Activated CD4-positive, alpha-beta memory T cell treated with anti-CD3 and anti-CD28 coated beads, Interleukin-2, amount 10 ng/mL, durations not matched to agents 7 days and 5 days (primary cell): ENCODE measurements at regions of chr17 and their contacts with region 1.

Region 1: GRCh38 chr17:21043286-21044232 is 748 bp upstream of the USP22 start:
- DNase-seq: peak; percentile 98
- H3K4me3 Mint-ChIP-seq: peak overlapping the region; percentile 80
- H3K27ac Mint-ChIP-seq: peak overlapping the region; percentile 88
- H3K4me1 Mint-ChIP-seq: peaks cover 30% of the 10 kb centered on the region
- H3K27me3 Mint-ChIP-seq: peaks cover 4% of the 10 kb centered on the region

Region 2: GRCh38 chr17:20922128-20922670 is 121.4 kb before region 1 on chr17:
- CTCF ChIA-PET with region 1: no interaction called
- POLR2A ChIA-PET with region 1: no interaction called
- DNase-seq: no peak
- H3K4me3 Mint-ChIP-seq: no peak overlapping the region
- H3K27ac Mint-ChIP-seq: no peak overlapping the region
- H3K4me1 Mint-ChIP-seq: peaks cover 1% of the 10 kb centered on the region
- H3K27me3 Mint-ChIP-seq: peaks cover 30% of the 10 kb centered on the region

Region 3: GRCh38 chr17:20992987-20993862 is 50.3 kb before region 1 on chr17:
- CTCF ChIA-PET with region 1: interaction called, 12 read pairs
- POLR2A ChIA-PET with region 1: interaction called, 7 read pairs
- DNase-seq: peak; percentile 65
- H3K4me3 Mint-ChIP-seq: no peak overlapping the region
- H3K27ac Mint-ChIP-seq: no peak overlapping the region
- H3K4me1 Mint-ChIP-seq: no peaks in the 10 kb centered on the region
- H3K27me3 Mint-ChIP-seq: no peaks in the 10 kb centered on the region

Region 4: GRCh38 chr17:21019976-21020586 is 23.5 kb before region 1 on chr17:
- CTCF ChIA-PET with region 1: interaction called, 12 read pairs
- POLR2A ChIA-PET with region 1: interaction called, 16 read pairs
- DNase-seq: peak; percentile 61
- H3K4me3 Mint-ChIP-seq: no peak overlapping the region
- H3K27ac Mint-ChIP-seq: no peak overlapping the region
- H3K4me1 Mint-ChIP-seq: peaks cover 25% of the 10 kb centered on the region
- H3K27me3 Mint-ChIP-seq: no peaks in the 10 kb centered on the region

Region 5: DNA sequence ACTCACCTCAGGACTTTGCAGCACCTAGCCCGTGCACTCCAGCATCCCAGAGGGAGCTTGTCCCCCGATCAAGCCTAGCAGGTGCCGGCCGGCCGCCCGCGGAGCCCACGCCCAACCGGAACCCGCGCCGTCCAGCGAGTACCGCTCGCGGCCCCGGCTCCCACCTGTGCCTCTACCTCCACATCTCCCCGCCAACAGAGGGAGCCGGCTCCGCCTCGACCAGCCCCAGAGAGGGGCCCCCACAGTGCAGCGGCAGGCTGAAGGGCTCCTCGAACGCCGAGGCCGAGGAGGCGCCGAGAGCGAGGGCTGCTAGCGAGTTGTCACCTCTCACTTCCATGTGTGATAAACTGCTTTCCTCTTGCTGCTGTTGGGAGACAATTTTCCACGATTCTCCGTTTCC is 42.1 kb after region 1 on chr17:
- CTCF ChIA-PET with region 1: no interaction called
- POLR2A ChIA-PET with region 1: no interaction called
- DNase-seq: no peak
- H3K4me3 Mint-ChIP-seq: no peak overlapping the region
- H3K27ac Mint-ChIP-seq: no peak overlapping the region
- H3K4me1 Mint-ChIP-seq: no peaks in the 10 kb centered on the region
- H3K27me3 Mint-ChIP-seq: peaks cover 13% of the 10 kb centered on the region

Region 6: DNA sequence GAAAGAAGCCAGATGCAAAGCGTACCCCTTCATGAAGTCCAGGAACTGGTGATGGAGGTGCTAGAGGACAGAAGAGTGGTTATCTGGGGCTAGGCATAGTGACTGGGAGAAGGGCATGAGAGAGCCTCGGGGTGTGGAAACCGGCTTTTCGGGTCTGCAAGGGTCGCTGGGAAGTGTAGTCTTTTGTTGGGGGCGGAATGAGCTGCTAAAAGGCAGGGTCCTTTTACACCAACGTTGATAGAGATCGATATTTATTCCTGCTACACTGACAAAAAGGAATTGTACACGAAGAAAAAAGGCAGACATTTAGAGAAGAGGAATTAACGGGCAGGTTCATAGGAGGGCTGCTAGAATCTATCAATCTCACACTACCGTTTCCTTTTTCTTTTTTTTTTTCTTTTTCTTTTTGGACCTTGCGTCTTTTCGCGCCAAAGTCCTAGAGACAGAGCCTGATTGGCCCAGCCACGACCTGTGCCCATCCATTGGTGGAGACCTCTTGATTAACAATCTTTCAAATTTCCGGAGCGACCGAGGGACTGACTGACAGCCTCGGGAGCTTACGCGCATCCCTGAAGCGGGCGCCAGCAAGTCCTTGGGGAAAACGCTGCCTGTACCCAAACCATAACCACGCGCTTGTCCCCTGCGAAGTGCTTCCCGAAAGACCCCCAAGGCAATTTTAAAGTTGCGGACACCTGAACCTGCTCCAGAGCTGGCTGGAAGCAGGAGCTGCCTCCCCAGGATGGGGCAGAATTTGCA is 55.6 kb after region 1 on chr17:
- CTCF ChIA-PET with region 1: interaction called, 43 read pairs
- POLR2A ChIA-PET with region 1: interaction called, 55 read pairs
- DNase-seq: peak; percentile 84
- H3K4me3 Mint-ChIP-seq: peak overlapping the region; percentile 87
- H3K27ac Mint-ChIP-seq: peak overlapping the region; percentile 86
- H3K4me1 Mint-ChIP-seq: peaks cover 24% of the 10 kb centered on the region
- H3K27me3 Mint-ChIP-seq: no peaks in the 10 kb centered on the region

Region 7: DNA sequence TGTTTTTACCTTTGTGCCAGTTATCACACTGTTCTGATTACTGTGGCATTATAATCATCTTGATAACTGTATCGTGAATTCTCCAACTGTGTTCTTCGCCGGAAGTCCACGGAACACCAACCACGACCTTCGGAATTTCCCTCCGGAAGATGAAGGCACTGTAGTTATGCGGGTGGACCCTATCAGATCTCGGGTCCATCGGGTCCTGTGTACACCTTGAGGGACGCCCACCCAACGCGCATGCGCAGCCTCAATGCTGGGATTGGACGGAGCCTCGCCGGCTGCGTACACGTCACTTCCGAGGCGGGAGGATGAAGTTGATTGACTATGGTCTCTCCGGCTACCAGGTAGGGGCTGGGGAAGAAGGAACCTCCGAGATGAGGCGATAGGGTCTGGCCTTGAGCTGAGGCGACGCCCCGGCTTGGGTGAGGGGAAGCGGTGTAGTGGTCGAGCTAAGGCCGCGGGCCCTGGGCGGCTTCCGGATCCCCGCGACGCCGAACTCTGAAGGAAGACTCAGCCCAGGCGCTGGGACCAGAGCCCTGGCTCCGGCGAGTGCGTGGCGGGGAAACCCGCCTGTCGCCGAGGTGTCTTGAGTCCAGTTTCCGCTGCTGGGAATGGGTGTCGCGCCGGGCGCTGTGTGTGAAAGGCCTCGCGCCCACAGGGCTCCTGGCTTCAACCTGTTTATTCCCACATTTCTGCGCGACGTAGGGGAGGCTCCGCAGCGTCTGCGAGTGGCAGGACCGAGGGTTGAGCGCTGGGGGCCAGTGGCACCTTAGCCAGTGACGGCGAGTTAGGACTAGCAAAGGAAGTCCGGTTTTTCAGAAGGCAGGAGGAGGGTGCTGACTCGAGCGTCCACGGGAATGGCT is 83.3 kb after region 1 on chr17 and contains the start of gene DHRS7B:
- CTCF ChIA-PET with region 1: interaction called, 5 read pairs
- POLR2A ChIA-PET with region 1: interaction called, 15 read pairs
- DNase-seq: peak; percentile 97
- H3K4me3 Mint-ChIP-seq: peak within 1 kb of the TSS; percentile 89
- H3K27ac Mint-ChIP-seq: peak within 1 kb of the TSS; percentile 86
- H3K4me1 Mint-ChIP-seq: peaks cover 35% of the 10 kb centered on the region
- H3K27me3 Mint-ChIP-seq: no peaks in the 10 kb centered on the region
- total RNA-seq, gene DHRS7B: 12.1 to 15.3 TPM

Region 8: DNA sequence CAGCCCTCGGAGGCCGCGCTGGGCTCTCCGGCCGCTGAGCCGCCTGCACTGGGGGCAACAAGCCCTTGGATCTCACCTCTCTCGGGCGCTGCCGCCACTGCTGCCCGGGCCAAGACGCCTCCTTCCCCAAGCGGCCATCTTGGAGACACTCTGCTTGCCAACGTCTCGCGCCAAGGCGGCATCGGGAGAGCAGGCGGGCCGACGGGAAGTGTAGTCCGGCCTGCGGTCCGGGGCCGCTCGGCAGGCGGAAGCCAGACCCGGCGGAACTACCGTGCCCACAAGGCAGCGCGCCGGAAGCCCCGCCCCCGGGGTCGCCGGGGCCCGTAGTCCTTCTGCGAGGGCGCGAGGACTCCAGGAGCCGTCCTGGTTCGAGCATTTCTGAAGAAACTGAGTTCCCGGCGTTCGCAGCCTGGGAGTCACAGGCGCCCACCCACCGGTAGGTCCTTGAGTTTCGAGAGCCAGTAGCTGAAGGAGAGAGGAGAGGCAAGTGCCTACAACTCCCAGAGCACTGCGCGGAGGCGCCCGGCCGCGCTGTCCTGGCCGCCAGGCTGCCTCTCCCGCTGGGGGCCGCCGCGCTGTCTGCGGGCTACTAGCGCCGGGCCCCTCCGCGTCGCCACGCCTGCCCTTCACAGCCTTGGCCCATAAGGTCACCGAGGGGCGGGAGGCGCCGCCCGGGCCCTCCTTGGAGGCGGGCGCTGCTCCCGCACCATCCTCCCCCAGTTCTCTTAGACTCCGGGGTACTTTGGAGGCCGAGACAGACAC is 170.6 kb after region 1 on chr17 and contains the start of gene TMEM11:
- CTCF ChIA-PET with region 1: interaction called, 4 read pairs
- POLR2A ChIA-PET with region 1: interaction called, 14 read pairs
- DNase-seq: peak; percentile 96
- H3K4me3 Mint-ChIP-seq: peak within 1 kb of the TSS; percentile 86
- H3K27ac Mint-ChIP-seq: peak within 1 kb of the TSS; percentile 81
- H3K4me1 Mint-ChIP-seq: peaks cover 66% of the 10 kb centered on the region
- H3K27me3 Mint-ChIP-seq: no peaks in the 10 kb centered on the region
- total RNA-seq, gene TMEM11: 23.2 to 23.3 TPM

Region 9: DNA sequence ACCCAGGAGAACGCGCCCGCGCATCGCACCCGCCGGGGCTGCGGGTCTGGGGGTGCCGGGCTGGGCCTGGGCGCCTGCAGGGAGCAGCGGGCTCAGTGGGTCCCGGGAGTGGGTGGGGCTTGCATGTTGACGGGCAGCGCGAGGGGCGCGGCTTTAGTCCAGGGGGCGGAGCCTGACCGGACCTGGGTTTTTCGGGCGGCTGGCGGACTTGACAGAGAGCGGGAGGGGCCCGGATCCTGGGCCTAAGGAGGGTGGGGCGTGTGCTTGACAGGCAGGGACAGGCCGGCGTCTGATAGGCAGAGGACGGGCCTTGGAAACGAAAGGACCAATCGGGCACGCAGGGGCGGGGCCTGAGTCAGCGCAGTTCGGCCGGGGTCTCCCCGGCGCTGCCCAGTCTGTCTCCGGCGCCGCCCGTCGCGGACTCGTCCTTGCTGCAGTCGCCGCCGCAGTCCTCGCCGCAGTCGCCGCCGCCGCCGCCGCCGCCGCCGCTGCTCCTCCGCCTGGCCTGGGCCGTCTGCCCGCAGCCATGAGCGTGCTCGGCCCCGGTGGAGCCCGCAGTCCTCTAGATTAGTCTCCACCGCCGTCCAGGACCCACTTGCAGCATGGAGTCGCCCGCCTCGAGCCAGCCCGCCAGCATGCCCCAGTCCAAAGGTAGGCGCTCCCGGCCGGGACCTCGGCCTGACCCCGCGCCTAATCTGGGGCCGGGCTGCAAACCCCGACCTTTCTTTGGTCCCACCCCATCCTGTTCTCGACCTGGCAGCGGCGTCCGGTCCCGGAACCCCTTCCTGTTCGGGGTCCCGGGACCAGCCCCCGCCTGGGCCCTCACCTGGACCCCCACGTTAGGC is 241.0 kb after region 1 on chr17 and contains the start of gene MAP2K3:
- CTCF ChIA-PET with region 1: interaction called, 3 read pairs
- POLR2A ChIA-PET with region 1: interaction called, 19 read pairs
- DNase-seq: peak; percentile 98
- H3K4me3 Mint-ChIP-seq: peak within 1 kb of the TSS; percentile 97
- H3K27ac Mint-ChIP-seq: peak within 1 kb of the TSS; percentile 92
- H3K4me1 Mint-ChIP-seq: peaks cover 52% of the 10 kb centered on the region
- H3K27me3 Mint-ChIP-seq: no peaks in the 10 kb centered on the region
- total RNA-seq, gene MAP2K3: 74.2 to 76.0 TPM